Gastrocnemius medialis (tissue), 4 donors: ENCODE measurements at regions of chrX and their contacts with region 1.

Region 1: DNA sequence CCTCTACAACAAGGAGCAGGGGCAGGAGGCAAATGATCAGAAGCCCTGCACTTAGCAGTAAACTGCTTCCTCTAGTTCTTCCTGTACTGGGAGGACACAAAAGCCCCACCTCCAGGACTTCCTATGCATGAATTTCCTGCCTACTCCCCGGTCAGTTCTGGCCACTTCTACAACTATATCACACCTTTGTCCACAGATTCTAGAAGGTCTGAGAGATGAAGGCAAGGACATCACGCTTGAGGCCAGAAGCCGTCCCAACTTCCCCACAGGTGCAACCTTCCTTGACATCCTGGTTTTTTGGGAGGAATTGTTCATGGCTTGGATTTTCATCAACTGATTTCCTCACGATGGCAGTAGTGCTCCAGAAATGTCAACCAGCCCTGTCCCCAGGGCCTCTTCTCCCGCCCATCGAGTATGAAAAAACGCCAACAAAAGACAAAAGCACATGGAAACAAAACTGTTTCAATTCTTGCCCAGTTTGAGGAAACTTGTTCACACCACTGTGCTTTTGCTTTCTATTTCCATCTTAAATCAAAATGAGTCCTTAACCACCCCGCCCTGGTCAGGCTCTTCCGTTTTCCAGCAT is 206.5 kb upstream of the STK26 start:
- DNase-seq: peak; percentile 20 to 30
- ATAC-seq: peak; percentile 77 to 85
- H3K4me3 ChIP-seq: peak overlapping the region in 3 of 4 donors; percentile 31 to 57 (median 50)
- H3K27ac ChIP-seq: peak overlapping the region; percentile 55 to 71 (median 66)
- H3K4me1 ChIP-seq: no peaks in the 10 kb centered on the region
- H3K27me3 ChIP-seq: no peaks in the 10 kb centered on the region
- CTCF ChIP-seq: peak in 4 of 5 experiments; percentile 19 to 74 (median 64)
- POLR2A ChIP-seq: no peak

Region 2: DNA sequence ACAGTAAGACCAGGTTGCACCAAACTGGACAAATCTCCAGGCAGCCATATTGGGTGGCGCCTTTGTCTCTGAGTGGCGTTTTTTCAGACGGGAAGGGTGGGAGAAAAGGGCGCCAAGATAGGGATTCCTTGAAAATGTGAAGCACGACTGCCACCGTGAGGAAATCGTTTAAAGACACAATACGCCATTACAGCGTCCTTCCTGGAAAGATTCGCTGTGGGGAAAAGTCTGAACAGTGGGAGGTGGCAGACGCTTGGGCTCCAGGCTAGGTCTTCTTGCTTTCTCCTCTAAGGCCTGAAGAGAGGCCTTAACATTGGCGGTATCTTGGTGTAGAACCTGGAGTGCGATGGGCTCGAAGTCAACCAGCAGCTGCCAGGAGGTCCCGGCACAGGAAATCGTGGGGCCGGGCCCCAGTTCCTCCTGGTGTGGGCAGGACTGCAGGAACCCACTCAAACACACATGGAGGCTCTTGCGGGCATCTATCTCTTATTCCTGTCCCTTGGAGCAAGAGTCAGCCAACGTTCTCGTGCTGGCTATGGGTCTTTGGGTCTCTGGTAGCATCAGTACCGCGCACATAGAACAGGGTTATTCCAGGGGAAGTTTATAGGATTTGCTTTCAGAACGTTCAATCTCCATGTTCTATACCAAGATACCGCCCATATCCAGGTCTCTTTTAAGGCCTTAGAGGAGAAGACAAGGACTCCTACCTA is 64.0 kb before region 1 on chrX:
- in situ Hi-C with region 1: no loop called
- intact Hi-C with region 1: loop called (anchors 2 kb)
- DNase-seq: no peak
- ATAC-seq: no peak
- H3K4me3 ChIP-seq: peak overlapping the region in 2 of 4 donors; percentile 64
- H3K27ac ChIP-seq: peak overlapping the region in 2 of 4 donors; percentile 70 to 78
- H3K4me1 ChIP-seq: peaks cover 0 to 5% of the 10 kb centered on the region in 2 donors
- H3K27me3 ChIP-seq: no peaks in the 10 kb centered on the region
- CTCF ChIP-seq: peak in 1 of 5 experiments; percentile 25
- POLR2A ChIP-seq: no peak